PC-3 (cell line): ENCODE measurements at regions of chr11 and their contacts with region 1.

Region 1: GRCh38 chr11:101914738-101915426 is at the start of gene CEP126:
- DNase-seq: peak; percentile 95
- ATAC-seq: peak; percentile 89
- H3K4me3 ChIP-seq: peak within 1 kb of the TSS; percentile 78
- H3K27ac ChIP-seq: peak within 1 kb of the TSS; percentile 54
- H3K4me1 ChIP-seq: peaks cover 35% of the 10 kb centered on the region
- H3K27me3 ChIP-seq: no peaks in the 10 kb centered on the region
- CTCF ChIP-seq: peak; percentile 58
- total RNA-seq, gene CEP126: 1.0 and 2.5 TPM in 2 replicates

Region 2: GRCh38 chr11:101835506-101836063 is 79.3 kb before region 1 on chr11:
- CTCF ChIA-PET with region 1: no interaction called
- POLR2A ChIA-PET with region 1: no interaction called
- intact Hi-C with region 1: no loop called
- DNase-seq: peak; percentile 89
- ATAC-seq: peak; percentile 95
- H3K4me3 ChIP-seq: peak overlapping the region; percentile 33; the same call in 1 of the 2 replicates
- H3K27ac ChIP-seq: peak overlapping the region; percentile 55
- H3K4me1 ChIP-seq: peaks cover 14% of the 10 kb centered on the region
- H3K27me3 ChIP-seq: no peaks in the 10 kb centered on the region
- CTCF ChIP-seq: no peak

Region 3: GRCh38 chr11:101860696-101861427 is 54.0 kb before region 1 on chr11:
- CTCF ChIA-PET with region 1: interaction called, 5 read pairs
- POLR2A ChIA-PET with region 1: interaction called, 5 read pairs
- intact Hi-C with region 1: loop called (anchors 1 kb)
- DNase-seq: peak; percentile 90
- ATAC-seq: peak; percentile 79
- H3K4me3 ChIP-seq: no peak overlapping the region
- H3K27ac ChIP-seq: no peak overlapping the region
- H3K4me1 ChIP-seq: peaks cover 31% of the 10 kb centered on the region
- H3K27me3 ChIP-seq: no peaks in the 10 kb centered on the region
- CTCF ChIP-seq: peak; percentile 91

Region 4: DNA sequence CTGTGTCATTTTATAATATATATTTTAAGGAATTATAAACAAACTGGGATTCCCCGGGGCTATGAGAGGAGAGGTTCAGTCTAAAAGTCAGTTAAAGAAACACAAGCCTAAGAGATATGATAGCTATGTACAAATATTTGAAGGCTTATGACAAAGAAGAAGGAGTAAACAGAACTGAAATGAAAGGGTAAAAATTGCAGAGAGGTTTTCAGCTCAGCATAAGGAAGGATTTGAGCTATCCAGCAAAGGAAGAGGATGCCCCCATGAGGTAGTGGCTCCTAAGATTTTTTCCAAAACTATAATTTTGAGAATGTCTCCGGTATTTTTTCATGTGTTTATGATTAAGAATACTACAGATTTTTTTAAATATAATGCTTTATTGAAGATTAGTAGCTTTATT is 59.4 kb after region 1 on chr11:
- CTCF ChIA-PET with region 1: interaction called, 5 read pairs
- POLR2A ChIA-PET with region 1: no interaction called
- intact Hi-C with region 1: loop called (anchors 2 kb)
- DNase-seq: peak; percentile 52
- ATAC-seq: peak; percentile 97
- H3K4me3 ChIP-seq: no peak overlapping the region
- H3K27ac ChIP-seq: no peak overlapping the region
- H3K4me1 ChIP-seq: 0 out of 2 replicates have a peak, but pooled peaks cover 5% of the 10 kb centered on the region
- H3K27me3 ChIP-seq: no peaks in the 10 kb centered on the region
- CTCF ChIP-seq: peak; percentile 61

Region 5: GRCh38 chr11:102073253-102073652 is 158.4 kb after region 1 on chr11:
- CTCF ChIA-PET with region 1: no interaction called
- POLR2A ChIA-PET with region 1: no interaction called
- intact Hi-C with region 1: no loop called
- DNase-seq: no peak
- ATAC-seq: no peak
- H3K4me3 ChIP-seq: no peak overlapping the region
- H3K27ac ChIP-seq: no peak overlapping the region
- H3K4me1 ChIP-seq: no peaks in the 10 kb centered on the region
- H3K27me3 ChIP-seq: no peaks in the 10 kb centered on the region
- CTCF ChIP-seq: no peak

Region 6: GRCh38 chr11:102177974-102178631 is 263.2 kb after region 1 on chr11:
- CTCF ChIA-PET with region 1: no interaction called
- POLR2A ChIA-PET with region 1: no interaction called
- intact Hi-C with region 1: loop called (anchors 10 kb)
- DNase-seq: peak; percentile 99
- ATAC-seq: peak; percentile 90
- H3K4me3 ChIP-seq: peak overlapping the region; percentile 26; the same call in 1 of the 2 replicates
- H3K27ac ChIP-seq: peak overlapping the region; percentile 80
- H3K4me1 ChIP-seq: peaks cover 27% of the 10 kb centered on the region
- H3K27me3 ChIP-seq: no peaks in the 10 kb centered on the region
- CTCF ChIP-seq: no peak

Region 7: DNA sequence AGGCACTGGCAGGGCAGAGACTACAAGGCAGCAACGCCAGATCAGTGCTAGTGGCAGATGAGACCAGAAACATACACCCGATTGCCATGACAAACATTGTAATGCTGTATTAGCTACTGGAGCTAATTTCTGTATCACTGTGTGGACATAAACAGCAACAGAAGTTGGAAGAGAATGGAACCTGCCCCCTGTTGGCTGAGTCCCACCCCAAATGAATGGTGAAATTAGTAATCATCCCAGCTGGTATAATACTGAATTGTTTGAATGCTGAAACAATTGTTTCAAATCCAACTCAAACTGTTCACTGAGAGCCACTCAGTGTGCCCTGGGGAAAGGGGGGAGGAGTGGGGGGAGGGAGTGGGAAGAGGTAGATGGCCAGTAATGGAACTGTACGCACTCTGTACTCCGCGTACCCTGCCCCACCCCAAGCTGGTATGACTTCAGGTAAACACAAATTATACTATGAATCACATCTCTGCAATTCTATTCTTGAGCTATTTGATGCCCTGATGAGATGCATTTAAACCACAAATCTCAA is 391.2 kb after region 1 on chr11:
- CTCF ChIA-PET with region 1: no interaction called
- POLR2A ChIA-PET with region 1: interaction called, 15 read pairs
- intact Hi-C with region 1: no loop called
- DNase-seq: peak; percentile 98
- ATAC-seq: peak; percentile 94
- H3K4me3 ChIP-seq: peak overlapping the region; percentile 55
- H3K27ac ChIP-seq: peak overlapping the region; percentile 87
- H3K4me1 ChIP-seq: peaks cover 37% of the 10 kb centered on the region
- H3K27me3 ChIP-seq: no peaks in the 10 kb centered on the region
- CTCF ChIP-seq: peak; percentile 63

Region 8: DNA sequence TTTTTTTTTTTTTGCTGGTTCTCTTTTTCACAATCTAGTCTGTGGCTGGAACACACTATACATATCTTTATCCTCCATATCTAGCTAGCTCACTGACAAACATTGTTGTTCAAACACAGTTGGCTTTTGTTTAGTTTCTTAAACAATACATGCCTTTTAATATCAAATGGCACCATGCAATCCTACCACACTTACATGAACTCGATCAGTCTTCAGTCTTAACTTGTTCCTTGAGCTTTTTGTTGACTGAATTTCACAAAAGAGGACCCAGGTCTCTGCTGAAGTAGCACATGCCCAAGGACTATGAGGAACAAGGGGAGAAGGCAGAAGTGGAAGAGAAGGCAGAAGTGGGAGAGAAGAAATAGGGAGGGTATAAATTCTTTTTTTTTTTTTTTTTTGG is 512.2 kb after region 1 on chr11:
- CTCF ChIA-PET with region 1: no interaction called
- POLR2A ChIA-PET with region 1: interaction called, 49 read pairs
- intact Hi-C with region 1: no loop called
- DNase-seq: no peak
- ATAC-seq: no peak
- H3K4me3 ChIP-seq: no peak overlapping the region
- H3K27ac ChIP-seq: no peak overlapping the region
- H3K4me1 ChIP-seq: no peaks in the 10 kb centered on the region
- H3K27me3 ChIP-seq: no peaks in the 10 kb centered on the region
- CTCF ChIP-seq: no peak